ENCODE measurements at regions of chr13 and their contacts with region 1.

Region 1: DNA sequence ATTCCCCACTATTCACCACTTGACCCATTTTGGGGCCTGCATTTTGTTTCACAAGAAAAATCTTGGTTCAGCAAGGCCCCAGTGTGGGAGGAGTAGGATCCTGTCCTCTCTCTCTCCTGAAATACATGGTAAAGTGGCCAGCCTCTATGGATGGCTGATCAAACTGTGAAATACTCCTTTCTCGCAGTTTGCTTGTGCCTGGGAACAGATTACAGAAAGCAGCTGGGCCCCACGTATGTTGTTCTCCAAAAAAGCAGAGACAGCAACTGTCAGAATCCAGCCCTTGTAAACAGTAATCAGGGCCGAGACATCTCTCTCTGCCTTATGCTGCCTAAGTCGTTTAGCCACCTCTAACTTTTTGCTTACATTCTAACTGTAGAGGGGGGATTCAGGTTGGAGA is 61.0 kb upstream of the RAP2A start:
- DNase-seq: peak in 3 of 10 donors; percentile 16 to 71 (median 26)

Region 2: GRCh38 chr13:97432917-97433726 is 60.2 kb after region 1 on chr13:
- intact Hi-C with region 1: loop called (anchors 5 kb)
- DNase-seq: peak; percentile 98 to 100 (median 98)